Cardiac septum (tissue), 1 donor: ENCODE measurements at regions of chr3 and their contacts with region 1.

Region 1: DNA sequence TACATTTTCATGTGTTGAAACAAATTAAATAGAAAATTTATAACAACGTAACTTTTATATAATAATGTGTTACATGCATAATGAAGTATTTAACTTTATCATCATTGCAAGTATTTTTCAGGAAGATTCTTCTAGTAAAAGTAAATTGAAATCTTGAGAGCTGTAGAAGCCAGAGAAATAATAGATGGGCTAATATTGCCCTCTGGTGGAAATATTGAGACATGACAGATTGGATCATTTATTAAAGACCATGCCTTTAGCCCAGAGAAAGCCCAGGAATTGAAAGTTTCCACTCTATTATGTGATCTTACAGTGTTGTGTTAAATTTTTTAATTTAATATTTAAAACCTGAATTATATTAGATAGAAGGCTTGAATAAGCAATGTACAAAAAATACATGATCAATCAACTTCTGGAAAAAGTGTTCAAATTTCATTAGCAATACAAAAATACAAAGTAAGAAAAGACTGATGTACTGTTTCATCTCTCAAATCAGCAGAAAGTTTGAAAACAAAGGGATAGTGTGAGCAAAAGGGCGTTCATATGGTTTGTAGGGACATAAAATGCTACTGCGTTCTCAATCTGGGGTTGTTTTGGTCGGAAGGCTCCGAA is 52.7 kb upstream of the SPTSSB start:
- DNase-seq: no peak

Region 2: GRCh38 chr3:160921020-160921635 is 502.9 kb before region 1 on chr3:
- intact Hi-C with region 1: loop called (anchors 10 kb)
- DNase-seq: no peak

Region 3: GRCh38 chr3:161274719-161275298 is 149.2 kb before region 1 on chr3:
- intact Hi-C with region 1: loop called (anchors 5 kb)
- DNase-seq: no peak